Dorsolateral prefrontal cortex (tissue), 120 donors: ENCODE measurements at regions of chr16 and their contacts with region 1.

Region 1: DNA sequence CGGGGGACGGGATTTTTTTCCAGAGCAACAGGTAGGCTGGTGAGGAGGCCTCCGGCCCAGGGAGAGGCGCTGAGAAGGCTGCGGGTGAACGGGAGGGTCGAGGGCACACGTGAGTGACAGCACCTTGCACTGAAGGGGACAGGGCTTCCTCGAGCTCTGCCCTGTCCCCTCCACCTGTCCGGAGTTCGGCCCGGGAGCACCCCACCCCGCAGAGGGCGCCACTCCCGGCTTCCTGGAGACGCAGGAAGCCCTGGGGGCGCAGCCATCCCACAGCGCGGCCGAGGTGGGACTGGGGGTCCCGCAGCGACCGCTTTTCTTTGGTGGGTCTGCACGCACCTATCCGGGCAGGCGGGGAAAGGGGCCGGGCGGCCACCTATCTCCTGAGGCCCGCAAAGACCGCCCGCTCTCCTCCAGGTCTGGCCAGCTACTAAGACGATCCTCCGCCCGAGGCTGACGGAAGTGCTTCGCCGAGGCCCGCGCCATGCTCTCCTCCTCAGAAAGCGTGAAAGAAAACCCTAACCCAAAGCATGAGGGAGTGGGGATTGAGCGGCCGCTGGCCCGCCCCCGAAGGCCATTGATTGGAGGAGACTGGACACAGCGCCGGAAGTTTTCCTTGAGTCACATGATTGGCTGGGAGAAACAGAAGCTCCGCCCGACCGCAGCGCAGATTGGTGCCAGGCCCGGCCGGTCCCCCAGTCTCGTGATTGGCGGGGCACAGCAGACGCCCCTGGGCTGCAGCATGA is 34.3 kb downstream of the DDX19A start:
- DNase-seq: peak; percentile 95 to 99 (median 98)
- H3K4me3 ChIP-seq: peak overlapping the region; percentile 54 to 99 (median 83)
- H3K27ac ChIP-seq: peak overlapping the region; percentile 30 to 93 (median 86)
- H3K27me3 ChIP-seq: no peaks in the 10 kb centered on the region
- CTCF ChIP-seq: peak in 40 of 56 donors; percentile 6 to 54 (median 30)

Region 2: GRCh38 chr16:69660166-69660565 is 720.9 kb before region 1 on chr16:
- intact Hi-C with region 1: no loop called
- DNase-seq: no peak
- H3K4me3 ChIP-seq: no peak overlapping the region
- H3K27ac ChIP-seq: no peak overlapping the region
- H3K27me3 ChIP-seq: no peaks in the 10 kb centered on the region
- CTCF ChIP-seq: no peak

Region 3: DNA sequence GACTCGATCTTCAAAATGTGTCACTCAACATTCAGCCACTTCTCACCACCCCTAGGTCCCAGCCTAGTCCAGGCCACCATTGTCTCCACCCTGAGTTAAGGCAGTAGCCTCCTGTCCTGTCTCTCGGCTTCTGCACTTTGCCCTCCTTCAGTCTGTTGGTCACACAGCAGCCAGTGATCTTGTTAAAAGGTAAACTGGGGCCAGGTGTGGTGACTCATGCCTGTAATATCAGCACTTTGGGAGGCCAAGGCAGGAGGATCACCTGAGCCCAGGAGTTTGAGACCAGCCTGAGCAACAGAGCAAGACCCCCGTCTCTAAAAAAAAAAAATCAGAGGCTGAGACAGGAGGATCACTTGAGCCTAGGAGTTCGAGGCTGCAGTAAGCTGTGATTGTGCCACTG is 593.1 kb before region 1 on chr16:
- intact Hi-C with region 1: no loop called
- DNase-seq: no peak
- H3K4me3 ChIP-seq: no peak overlapping the region
- H3K27ac ChIP-seq: no peak overlapping the region
- H3K27me3 ChIP-seq: no peaks in the 10 kb centered on the region
- CTCF ChIP-seq: no peak

Region 4: DNA sequence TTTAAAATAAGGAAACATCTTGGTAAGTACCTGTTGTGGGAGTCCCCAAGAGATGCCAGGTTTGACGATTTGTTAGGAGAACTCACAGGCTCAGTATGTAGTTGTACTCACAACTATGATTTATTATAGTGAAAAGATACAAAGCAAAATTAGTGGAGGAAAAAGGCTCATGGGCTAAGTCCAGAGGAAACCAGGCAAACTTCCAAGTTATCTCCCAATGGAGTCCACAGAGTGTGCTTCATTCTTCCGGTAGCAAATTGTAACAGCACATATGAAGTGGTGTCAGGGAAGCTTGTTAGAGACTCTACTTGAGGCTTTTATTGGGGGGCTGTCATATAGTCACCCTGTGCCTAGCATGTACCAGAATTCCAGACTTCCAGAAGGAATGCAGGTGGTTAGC is 32.0 kb before region 1 on chr16:
- intact Hi-C with region 1: loop called in 1 of 2 experiments (anchors 5 kb)
- DNase-seq: no peak
- H3K4me3 ChIP-seq: no peak overlapping the region
- H3K27ac ChIP-seq: no peak overlapping the region
- H3K27me3 ChIP-seq: no peaks in the 10 kb centered on the region
- CTCF ChIP-seq: no peak

Region 5: GRCh38 chr16:70438969-70439862 is 58.2 kb after region 1 on chr16 and contains the start of gene ST3GAL2:
- intact Hi-C with region 1: loop called (anchors 1 to 5 kb)
- DNase-seq: peak; percentile 90 to 96 (median 94)
- H3K4me3 ChIP-seq: peak within 1 kb of the TSS; percentile 48 to 99 (median 81)
- H3K27ac ChIP-seq: peak within 1 kb of the TSS in 58 of 59 donors; percentile 31 to 96 (median 86)
- H3K27me3 ChIP-seq: no peaks in the 10 kb centered on the region
- CTCF ChIP-seq: peak in 29 of 56 donors; percentile 4 to 55 (median 30)
- total RNA-seq, gene ST3GAL2: 15.9 to 62.9 (median 30.9) TPM

Region 6: DNA sequence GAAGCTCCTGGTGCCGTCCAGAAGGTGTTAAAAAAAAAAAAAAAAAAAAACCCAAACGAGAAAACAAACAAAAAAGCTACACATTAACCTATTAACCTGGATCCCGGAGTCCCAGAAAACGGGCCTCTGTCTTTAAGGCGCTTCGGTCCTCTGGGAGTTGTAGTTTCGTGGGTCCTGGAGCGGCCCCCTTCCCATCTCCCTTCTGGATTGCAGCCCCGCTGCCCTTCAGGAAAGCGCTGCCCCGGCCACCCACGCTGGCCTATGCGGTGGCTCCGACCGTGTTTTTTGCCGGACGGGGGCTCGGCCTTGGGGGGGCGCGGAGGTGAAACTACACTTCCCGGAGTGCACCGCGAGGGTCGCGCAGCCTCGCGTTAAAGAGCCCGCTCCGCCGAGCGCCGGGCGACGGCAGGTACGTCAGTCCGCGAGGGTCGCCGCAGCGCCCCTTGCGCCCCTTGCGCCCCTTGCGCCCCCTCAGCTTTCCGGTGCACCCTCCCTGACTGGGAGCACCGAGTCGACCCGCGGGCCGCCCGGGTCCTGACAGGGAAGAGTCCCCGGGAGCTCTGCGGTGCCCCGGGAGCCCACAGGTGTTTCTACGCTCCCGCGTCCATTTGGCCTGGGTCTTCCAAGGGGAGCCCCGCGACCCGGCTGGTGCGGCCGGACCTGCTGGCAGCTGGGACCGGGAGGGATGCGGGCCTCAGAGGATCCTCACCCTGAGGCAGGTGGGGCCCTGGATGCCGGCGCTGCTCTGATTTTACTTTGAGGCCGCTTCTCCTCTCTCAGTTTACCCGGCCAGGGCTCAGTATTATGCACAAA is 73.4 kb after region 1 on chr16 and contains the start of gene FCSK:
- intact Hi-C with region 1: loop called in 1 of 2 experiments (anchors 2 kb)
- DNase-seq: peak in 8 of 10 donors; percentile 53 to 81 (median 70)
- H3K4me3 ChIP-seq: peak within 1 kb of the TSS; percentile 75 to 100 (median 98)
- H3K27ac ChIP-seq: peak within 1 kb of the TSS; percentile 77 to 100 (median 97)
- H3K27me3 ChIP-seq: peaks cover 0 to 7% (median 0%) of the 10 kb centered on the region in 45 donors
- CTCF ChIP-seq: peak in 22 of 56 donors; percentile 1 to 47 (median 22)
- total RNA-seq, gene FCSK: 15.7 to 38.7 (median 23.8) TPM

Region 7: GRCh38 chr16:70508752-70509151 is 127.7 kb after region 1 on chr16:
- intact Hi-C with region 1: no loop called
- DNase-seq: no peak
- H3K4me3 ChIP-seq: no peak overlapping the region
- H3K27ac ChIP-seq: no peak overlapping the region
- H3K27me3 ChIP-seq: no peaks in the 10 kb centered on the region
- CTCF ChIP-seq: peak in 8 of 56 donors; percentile 11 to 29 (median 24)

Region 8: DNA sequence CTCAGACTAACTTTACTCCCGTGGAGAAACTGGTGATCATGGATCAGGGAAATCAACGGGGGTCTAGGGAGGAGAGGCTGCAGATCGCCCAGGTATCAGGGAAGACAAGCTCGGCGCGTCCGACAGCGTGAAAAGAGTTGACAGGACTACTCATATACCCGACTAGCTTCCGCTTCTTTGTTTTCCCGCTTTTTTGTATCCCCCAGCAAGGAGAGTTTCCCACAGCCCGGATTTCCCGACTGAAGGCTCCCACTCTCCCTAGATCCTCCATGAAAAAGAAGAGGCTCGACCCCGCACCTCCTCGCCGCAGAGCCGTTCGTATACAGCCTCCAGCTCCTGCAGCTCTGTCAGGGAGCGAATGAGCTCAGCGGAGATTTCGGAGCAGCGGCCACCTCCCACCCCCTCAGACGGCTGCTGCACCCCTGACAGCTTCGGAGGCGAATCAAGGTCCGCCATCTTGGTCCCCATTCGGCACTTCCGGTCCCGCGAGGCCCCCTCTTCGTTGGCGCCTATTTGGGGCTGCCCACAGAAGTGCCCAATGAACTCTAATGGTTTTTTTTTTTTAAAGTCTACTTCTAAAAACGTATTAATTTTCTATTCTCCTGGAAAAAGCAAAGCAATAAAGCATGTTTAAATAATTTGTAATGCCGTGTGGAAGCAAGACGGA is 142.2 kb after region 1 on chr16 and contains the start of gene COG4:
- intact Hi-C with region 1: loop called (anchors 2 to 5 kb)
- DNase-seq: peak; percentile 81 to 91 (median 87)
- H3K4me3 ChIP-seq: peak within 1 kb of the TSS; percentile 49 to 100 (median 88)
- H3K27ac ChIP-seq: peak within 1 kb of the TSS; percentile 59 to 97 (median 90)
- H3K27me3 ChIP-seq: no peaks in the 10 kb centered on the region
- CTCF ChIP-seq: peak in 10 of 56 donors; percentile 11 to 45 (median 31)
- total RNA-seq, gene COG4: 33.6 to 68.0 (median 51.2) TPM

Region 9: GRCh38 chr16:70653809-70654771 is 273.1 kb after region 1 on chr16:
- intact Hi-C with region 1: loop called in 1 of 2 experiments (anchors 5 kb)
- DNase-seq: peak in 8 of 10 donors; percentile 56 to 87 (median 80)
- H3K4me3 ChIP-seq: peak overlapping the region in 46 of 59 donors; percentile 2 to 50 (median 28)
- H3K27ac ChIP-seq: peak overlapping the region in 2 of 59 donors; percentile 46 to 66
- H3K27me3 ChIP-seq: no peaks in the 10 kb centered on the region
- CTCF ChIP-seq: peak; percentile 85 to 99 (median 94)

Region 10: GRCh38 chr16:71201054-71201453 is 820.0 kb after region 1 on chr16:
- intact Hi-C with region 1: no loop called
- DNase-seq: no peak
- H3K4me3 ChIP-seq: no peak overlapping the region
- H3K27ac ChIP-seq: no peak overlapping the region
- H3K27me3 ChIP-seq: peaks cover 0 to 11% (median 0%) of the 10 kb centered on the region in 45 donors
- CTCF ChIP-seq: no peak